ENCODE measurements at regions of chr1 and their contacts with region 1.

Region 1: GRCh38 chr1:166489670-166490436 is 323.1 kb upstream of the FAM78B start:
- DNase-seq: no peak

Region 2: DNA sequence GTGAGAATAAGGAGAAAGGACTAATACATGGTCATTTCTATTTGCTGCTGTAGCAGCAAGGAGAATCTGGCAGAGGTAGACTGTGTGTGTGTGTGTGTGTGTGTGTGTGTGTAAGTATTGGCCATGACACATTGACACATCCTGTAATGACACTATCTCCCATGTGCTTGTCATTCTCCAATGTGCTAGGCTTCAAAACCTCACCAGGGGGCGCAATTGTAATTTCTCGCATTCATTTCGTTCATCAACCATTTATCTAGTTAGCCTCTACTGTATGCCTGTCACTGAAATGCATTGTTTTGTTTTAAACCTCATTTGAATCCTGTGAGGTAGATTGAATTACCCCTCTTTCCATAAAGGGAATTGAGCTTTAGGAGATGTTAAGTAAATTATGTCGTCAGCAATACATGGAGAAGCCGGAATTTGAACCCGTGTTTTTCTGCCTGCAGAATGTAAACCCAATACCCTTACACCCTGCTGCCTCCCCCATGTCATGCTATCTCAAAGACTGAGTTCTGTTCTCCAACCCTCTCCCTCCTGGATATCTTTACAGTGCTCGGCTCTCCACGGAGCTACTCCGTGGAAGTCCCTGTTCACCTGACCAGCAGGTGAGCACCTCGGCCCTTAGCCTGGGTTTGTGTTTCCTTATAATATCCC is 561.6 kb before region 1 on chr1:
- intact Hi-C with region 1: loop called (anchors 10 kb)
- DNase-seq: peak; percentile 47

Region 3: GRCh38 chr1:165933446-165934178 is 556.2 kb before region 1 on chr1:
- intact Hi-C with region 1: loop called (anchors 10 kb)
- DNase-seq: no peak